ENCODE measurements at regions of chr1 and their contacts with region 1.

Region 1: DNA sequence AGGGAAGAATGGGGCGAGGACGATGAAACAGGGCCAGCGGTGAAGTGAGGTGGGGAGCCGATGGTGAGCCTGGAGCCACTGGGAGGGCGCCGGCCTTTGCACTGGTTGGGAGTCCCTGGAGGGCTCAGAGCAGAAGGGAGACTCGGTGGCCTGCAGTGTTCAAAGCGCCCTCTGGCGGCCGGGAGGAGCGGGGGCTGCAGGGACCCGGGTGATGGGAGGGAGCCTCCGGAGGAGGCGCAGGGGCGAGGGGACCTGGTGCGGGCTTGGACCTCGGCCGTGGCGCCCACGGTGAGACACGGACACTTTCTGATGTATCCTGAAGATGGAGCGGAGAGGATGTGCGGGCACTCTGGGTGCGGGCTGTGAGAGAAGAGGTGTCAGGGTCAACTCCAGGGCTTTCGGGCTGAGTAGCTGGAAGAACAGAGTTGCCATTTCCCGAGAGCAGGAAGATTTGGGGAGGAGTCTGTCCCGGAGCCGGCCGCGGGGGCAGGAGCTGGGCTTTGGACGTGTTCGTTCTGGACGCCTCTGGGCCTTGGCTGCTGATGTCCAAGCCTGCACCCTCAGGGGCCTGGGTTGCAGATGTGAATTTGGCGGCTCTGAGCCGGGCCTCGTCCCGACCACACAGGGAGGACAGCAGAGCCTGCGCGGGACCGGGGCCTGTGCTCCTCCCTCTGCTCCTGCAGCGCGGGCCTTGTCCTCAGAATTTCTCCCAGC is 29.7 kb downstream of the HEYL start:
- DNase-seq: peak; percentile 22 to 70 (median 46)
- H3K4me3 ChIP-seq: no peak overlapping the region
- H3K27ac ChIP-seq: no peak overlapping the region
- H3K4me1 ChIP-seq: no peaks in the 10 kb centered on the region
- H3K27me3 ChIP-seq: no peaks in the 10 kb centered on the region
- CTCF ChIP-seq: peak in 1 of 3 donors; percentile 42
- EP300 ChIP-seq: no peak
- POLR2A ChIP-seq: no peak

Region 2: GRCh38 chr1:39538588-39539465 is 70.9 kb before region 1 on chr1:
- intact Hi-C with region 1: no loop called
- DNase-seq: peak; percentile 72 to 81 (median 73)
- H3K4me3 ChIP-seq: no peak overlapping the region
- H3K27ac ChIP-seq: no peak overlapping the region
- H3K4me1 ChIP-seq: no peaks in the 10 kb centered on the region
- H3K27me3 ChIP-seq: no peaks in the 10 kb centered on the region
- CTCF ChIP-seq: peak; percentile 77 to 93 (median 83)
- EP300 ChIP-seq: no peak
- POLR2A ChIP-seq: no peak

Region 3: DNA sequence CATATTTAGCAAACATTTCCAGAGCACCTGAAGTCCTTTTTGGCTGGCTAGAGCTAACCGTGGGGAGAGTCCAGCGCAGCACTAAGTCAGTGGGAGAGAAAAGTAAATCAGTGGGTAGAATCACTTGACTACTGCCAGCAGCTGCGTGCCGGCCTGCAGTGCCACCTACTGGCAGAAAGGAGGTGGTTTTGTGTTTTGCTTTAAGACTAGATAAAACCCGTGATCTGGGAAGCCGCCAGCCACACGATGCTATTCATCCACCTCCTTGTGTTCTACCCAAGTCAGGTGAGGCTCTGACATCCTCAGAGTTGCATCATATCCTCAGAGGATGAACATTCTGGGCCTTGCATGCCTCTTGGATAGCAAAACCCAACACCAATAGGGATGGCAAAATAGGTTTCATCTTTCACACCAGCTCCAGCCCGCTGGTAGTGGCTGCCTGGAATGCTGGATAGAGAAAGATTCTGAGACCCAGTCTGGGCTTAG is 43.8 kb after region 1 on chr1:
- intact Hi-C with region 1: loop called (anchors 1 to 2 kb)
- DNase-seq: peak; percentile 79 to 89 (median 80)
- H3K4me3 ChIP-seq: no peak overlapping the region
- H3K27ac ChIP-seq: no peak overlapping the region
- H3K4me1 ChIP-seq: peaks cover 2% of the 10 kb centered on the region
- H3K27me3 ChIP-seq: no peaks in the 10 kb centered on the region
- CTCF ChIP-seq: peak; percentile 87 to 93 (median 91)
- EP300 ChIP-seq: no peak
- POLR2A ChIP-seq: no peak

Region 4: DNA sequence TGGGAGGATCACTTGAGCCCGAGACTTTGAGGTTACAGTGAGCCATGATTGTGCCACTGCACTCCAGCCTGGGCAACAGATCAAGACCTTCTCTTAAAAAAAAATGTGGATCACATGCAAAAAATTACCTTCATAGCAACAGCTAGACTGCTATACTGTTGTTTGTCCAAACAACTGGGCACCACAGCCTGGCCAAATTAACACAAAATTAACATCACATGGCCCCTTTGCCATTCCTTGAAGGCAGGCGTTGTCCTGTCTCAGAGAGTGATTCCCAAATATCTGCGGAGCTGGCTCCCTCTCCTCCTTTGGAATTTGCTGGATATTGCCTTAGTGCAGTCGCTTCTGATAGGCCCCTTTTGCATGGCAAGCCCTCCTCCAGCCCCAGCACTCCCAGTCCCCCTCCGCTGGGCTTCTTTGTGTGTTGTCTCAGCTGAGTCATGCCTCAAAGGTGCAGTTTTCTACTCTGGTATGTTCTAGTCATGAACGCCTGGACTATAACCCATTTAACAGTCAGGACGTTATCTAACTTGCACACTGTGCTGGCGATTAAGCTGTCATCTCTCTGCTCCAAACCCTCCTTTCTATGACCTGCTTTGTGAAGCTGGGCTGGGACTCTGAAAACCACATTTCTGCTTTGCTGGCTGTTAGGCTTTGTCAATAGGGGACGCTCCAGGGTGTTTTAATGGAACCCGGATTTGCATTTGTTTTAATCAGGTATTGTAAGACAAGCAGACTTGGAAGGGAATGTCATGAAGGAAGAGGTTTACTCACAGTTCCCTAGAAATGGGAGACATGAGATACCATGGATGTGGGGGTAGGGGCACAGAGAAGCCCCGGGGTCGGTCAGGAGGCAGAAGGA is 101.6 kb after region 1 on chr1:
- intact Hi-C with region 1: loop called in 1 of 4 experiments (anchors 10 kb)
- DNase-seq: no peak
- H3K4me3 ChIP-seq: no peak overlapping the region
- H3K27ac ChIP-seq: no peak overlapping the region
- H3K4me1 ChIP-seq: no peaks in the 10 kb centered on the region
- H3K27me3 ChIP-seq: no peaks in the 10 kb centered on the region
- CTCF ChIP-seq: no peak
- EP300 ChIP-seq: no peak
- POLR2A ChIP-seq: no peak

Region 5: GRCh38 chr1:39720094-39720999 is 110.6 kb after region 1 on chr1:
- intact Hi-C with region 1: loop called in 3 of 4 experiments (anchors 5 to 10 kb)
- DNase-seq: no peak
- H3K4me3 ChIP-seq: no peak overlapping the region
- H3K27ac ChIP-seq: no peak overlapping the region
- H3K4me1 ChIP-seq: no peaks in the 10 kb centered on the region
- H3K27me3 ChIP-seq: no peaks in the 10 kb centered on the region
- CTCF ChIP-seq: peak; percentile 70 to 79 (median 72)
- EP300 ChIP-seq: no peak
- POLR2A ChIP-seq: no peak